HepG2 (cell line): ENCODE measurements at regions of chr12 and their contacts with region 1.

Region 1: DNA sequence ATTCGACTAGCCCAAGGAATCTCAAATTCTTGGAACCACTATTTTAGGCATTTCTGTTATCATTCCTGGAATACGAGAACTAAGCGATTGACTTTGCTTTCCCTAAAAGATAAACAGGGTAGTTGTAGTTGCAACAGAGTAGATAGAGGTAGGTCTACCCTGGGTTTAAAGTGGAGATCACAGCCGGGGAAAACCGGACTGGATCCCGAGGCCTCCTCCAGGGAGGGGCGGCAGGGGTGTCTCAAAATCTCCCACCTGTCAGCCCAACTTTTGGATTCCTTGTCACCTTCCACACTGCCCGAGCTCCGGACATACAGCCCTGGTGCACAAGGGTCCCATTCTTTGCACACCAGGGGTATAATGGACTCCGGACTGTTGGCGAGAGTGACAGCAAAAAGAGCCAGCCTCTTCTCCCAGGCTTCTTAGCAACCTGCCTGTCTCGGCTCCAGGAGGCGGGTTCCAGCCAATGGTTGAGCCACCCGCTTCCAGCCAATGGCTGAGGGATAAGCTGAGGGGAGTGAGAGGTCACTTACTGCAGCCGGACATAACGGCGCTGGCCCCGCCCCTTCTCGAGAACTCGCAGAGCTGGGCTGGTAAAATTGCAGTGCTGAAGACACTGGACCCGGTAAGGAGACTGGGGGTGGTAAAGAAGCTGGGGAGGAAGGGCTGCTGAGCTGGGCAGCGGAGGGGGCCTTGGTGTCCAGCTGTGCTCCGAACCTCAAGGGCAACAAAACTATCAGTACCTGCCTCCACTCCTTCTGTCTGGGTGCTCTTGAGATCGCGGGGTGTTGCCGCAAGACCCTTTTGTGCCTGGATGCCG is at the start of gene SUOX:
- DNase-seq: peak; percentile 98
- ATAC-seq: peak; percentile 98
- H3K4me3 ChIP-seq: peak within 1 kb of the TSS; percentile 84 to 88 (median 84)
- H3K27ac ChIP-seq: peak within 1 kb of the TSS; percentile 92
- H3K4me1 ChIP-seq: peaks cover 50% of the 10 kb centered on the region
- H3K27me3 ChIP-seq: peaks cover 0 to 3% of the 10 kb centered on the region in 2 experiments; a peak in 1 of 5 replicates
- CTCF ChIP-seq: peak; percentile 20
- EP300 ChIP-seq: no peak
- POLR2A ChIP-seq: peak; percentile 75 to 86
- RAD21 ChIP-seq: no peak; the same call in 1 of the 2 replicates
- total RNA-seq, gene SUOX: 23.9 and 24.6 TPM in 2 replicates

Region 2: DNA sequence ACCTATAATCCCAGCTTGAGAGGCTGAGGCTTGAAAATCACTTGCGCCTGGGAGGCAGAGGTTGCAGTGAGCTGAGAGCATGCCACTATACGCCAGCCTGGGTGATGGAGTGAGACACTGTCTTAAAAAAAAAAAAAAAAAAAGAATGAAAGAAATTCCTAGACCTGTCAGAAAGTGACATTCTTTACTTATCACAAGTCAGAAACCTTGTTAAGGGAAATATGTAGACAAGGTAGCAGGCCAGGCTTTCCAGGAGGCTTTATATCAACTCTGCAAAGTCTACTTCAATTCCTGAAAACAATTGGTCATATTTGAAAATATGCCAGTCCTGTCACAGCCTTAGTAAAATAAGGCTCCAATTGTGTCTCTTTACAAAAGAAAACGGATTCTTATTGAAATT is 135.1 kb before region 1 on chr12:
- CTCF ChIA-PET with region 1: no interaction called
- POLR2A ChIA-PET with region 1: no interaction called
- in situ Hi-C with region 1: no loop called
- intact Hi-C with region 1: no loop called
- DNase-seq: no peak
- ATAC-seq: no peak
- H3K4me3 ChIP-seq: no peak overlapping the region
- H3K27ac ChIP-seq: no peak overlapping the region
- H3K4me1 ChIP-seq: no peaks in the 10 kb centered on the region
- H3K27me3 ChIP-seq: peaks cover 0 to 6% of the 10 kb centered on the region in 2 experiments; a peak in 1 of 5 replicates
- CTCF ChIP-seq: no peak
- EP300 ChIP-seq: no peak
- POLR2A ChIP-seq: no peak
- RAD21 ChIP-seq: no peak

Region 3: GRCh38 chr12:56007564-56008559 is 10.9 kb after region 1 on chr12:
- CTCF ChIA-PET with region 1: no interaction called
- POLR2A ChIA-PET with region 1: interaction called, 34 read pairs
- in situ Hi-C with region 1: no loop called
- intact Hi-C with region 1: loop called (anchors 2 kb)
- DNase-seq: no peak
- ATAC-seq: peak; percentile 33
- H3K4me3 ChIP-seq: peak overlapping the region; percentile 59 to 84 (median 69)
- H3K27ac ChIP-seq: peak overlapping the region; percentile 73
- H3K4me1 ChIP-seq: peaks cover 75% of the 10 kb centered on the region
- H3K27me3 ChIP-seq: no peaks in the 10 kb centered on the region; a peak in 1 of 5 replicates
- CTCF ChIP-seq: no peak
- EP300 ChIP-seq: no peak
- POLR2A ChIP-seq: no peak; a peak in 1 of 4 replicates
- RAD21 ChIP-seq: no peak

Region 4: DNA sequence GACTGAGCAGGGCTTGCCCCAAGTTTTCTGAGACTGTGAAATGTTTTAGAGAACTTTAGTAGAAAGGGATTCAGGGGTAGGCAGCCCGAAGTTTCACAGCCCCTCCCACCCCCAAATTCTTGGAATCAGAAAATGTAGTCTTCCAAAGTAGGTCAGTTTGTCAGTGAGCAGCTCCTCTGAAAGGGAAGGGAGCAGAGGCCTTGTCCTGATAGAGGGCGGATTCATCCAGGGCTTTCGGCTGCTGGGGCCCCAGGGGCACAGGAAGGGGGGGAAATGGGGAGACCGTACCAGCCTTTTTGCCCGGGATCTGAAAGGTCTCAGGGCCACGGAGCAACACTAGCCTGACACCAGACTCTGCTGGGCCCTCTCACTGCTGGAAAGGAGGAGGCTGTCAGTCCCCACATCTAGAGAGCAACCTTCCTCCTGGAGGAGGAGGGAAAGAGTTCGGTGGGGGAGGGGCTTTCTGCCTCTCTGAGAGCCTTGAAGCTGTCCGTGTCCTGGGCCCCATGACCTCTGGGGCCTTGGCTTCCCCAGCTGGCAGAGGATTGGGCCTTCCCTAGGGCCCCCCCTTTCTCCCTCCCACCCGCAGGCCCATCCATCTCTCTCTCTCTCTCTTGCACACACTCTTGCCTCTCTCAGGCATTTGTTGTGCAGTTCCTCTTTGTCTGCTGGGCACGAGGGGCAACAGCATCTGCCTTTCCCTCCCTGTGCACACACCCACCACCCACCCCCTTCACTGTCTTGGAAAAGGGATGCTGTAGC is 23.7 kb after region 1 on chr12 and contains the start of gene IKZF4:
- CTCF ChIA-PET with region 1: no interaction called
- POLR2A ChIA-PET with region 1: interaction called, 24 read pairs
- in situ Hi-C with region 1: no loop called
- intact Hi-C with region 1: no loop called
- DNase-seq: no peak
- ATAC-seq: peak; percentile 67
- H3K4me3 ChIP-seq: peak within 1 kb of the TSS; percentile 34 to 56 (median 34); a peak in 5 of 6 replicates
- H3K27ac ChIP-seq: peak within 1 kb of the TSS; percentile 47
- H3K4me1 ChIP-seq: peaks cover 40% of the 10 kb centered on the region
- H3K27me3 ChIP-seq: no peaks in the 10 kb centered on the region
- CTCF ChIP-seq: no peak
- EP300 ChIP-seq: no peak
- POLR2A ChIP-seq: peak in 1 of 2 experiments; percentile 37; a peak in 1 of 4 replicates
- RAD21 ChIP-seq: no peak
- total RNA-seq, gene IKZF4: 0.58 and 0.76 TPM in 2 replicates

Region 5: DNA sequence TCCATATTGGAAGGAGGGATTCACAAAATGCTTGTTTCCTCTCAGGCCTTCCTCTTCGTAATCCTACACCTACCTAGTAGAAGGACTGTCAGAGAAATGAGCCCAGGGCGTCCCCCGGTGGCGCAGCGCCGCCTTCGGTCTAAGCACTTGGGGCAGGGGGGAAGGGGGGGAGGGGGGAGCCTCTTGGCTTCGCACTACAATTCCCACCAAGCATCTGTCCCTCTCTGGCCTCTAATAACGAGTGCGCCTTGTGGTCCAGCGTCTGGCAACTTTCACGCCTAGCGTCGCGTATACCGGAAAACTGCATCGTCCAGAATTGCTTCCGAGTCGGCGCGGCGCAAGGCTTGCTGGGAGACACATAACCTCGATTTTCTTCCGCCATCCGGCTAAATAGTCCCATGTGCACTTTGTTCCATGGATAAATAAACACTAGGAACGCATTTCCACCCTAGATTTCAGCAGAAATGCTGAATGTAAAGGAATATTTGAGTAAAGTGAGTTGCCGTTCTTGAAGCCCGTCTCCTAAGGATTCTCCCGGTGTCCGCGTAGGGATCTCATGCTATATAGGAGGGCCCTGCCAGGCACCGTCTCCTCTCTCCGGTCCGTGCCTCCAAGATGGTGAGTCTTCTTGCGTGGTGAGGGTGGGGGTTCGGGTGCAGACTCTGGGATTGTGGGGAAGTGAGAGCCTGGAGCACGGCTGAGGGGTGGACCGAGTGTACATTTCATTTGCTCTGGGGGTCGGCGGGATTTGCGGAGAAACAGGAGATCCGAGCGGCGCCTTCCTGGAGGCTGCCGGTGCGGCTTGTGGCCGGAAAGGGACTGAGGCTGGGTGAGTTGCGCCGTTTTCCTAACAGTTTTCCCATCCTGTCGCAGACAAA is 44.9 kb after region 1 on chr12 and contains the start of gene RPS26:
- CTCF ChIA-PET with region 1: interaction called, 4 read pairs
- POLR2A ChIA-PET with region 1: interaction called, 26 read pairs
- in situ Hi-C with region 1: no loop called
- intact Hi-C with region 1: loop called (anchors 1 kb)
- DNase-seq: peak; percentile 99
- ATAC-seq: peak; percentile 95
- H3K4me3 ChIP-seq: peak within 1 kb of the TSS; percentile 84 to 94 (median 87)
- H3K27ac ChIP-seq: peak within 1 kb of the TSS; percentile 98
- H3K4me1 ChIP-seq: peaks cover 45% of the 10 kb centered on the region
- H3K27me3 ChIP-seq: no peaks in the 10 kb centered on the region
- CTCF ChIP-seq: peak; percentile 79
- EP300 ChIP-seq: 0 out of 4 replicates have a peak, but pooled peaks of 1 of the 2 experiments have one; percentile 10
- POLR2A ChIP-seq: peak; percentile 98 to 99
- RAD21 ChIP-seq: 0 out of 2 replicates have a peak, but pooled peaks have one; percentile 10
- total RNA-seq, gene RPS26: 421 and 486 TPM in 2 replicates

Region 6: GRCh38 chr12:56104109-56104814 is 107.3 kb after region 1 on chr12 and contains the start of gene PA2G4:
- CTCF ChIA-PET with region 1: no interaction called
- POLR2A ChIA-PET with region 1: interaction called, 11 read pairs
- in situ Hi-C with region 1: no loop called
- intact Hi-C with region 1: no loop called
- DNase-seq: peak; percentile 97
- ATAC-seq: peak; percentile 94
- H3K4me3 ChIP-seq: peak within 1 kb of the TSS; percentile 50 to 85 (median 74)
- H3K27ac ChIP-seq: peak within 1 kb of the TSS; percentile 76
- H3K4me1 ChIP-seq: peaks cover 35% of the 10 kb centered on the region
- H3K27me3 ChIP-seq: no peaks in the 10 kb centered on the region
- CTCF ChIP-seq: 0 out of 2 replicates have a peak, but pooled peaks have one; percentile 10
- EP300 ChIP-seq: peak in 1 of 2 experiments; percentile 21; a peak in 2 of 4 replicates
- POLR2A ChIP-seq: peak; percentile 91
- RAD21 ChIP-seq: no peak
- total RNA-seq, gene PA2G4: 240 and 281 TPM in 2 replicates